ENCODE measurements at regions of chr3 and their contacts with region 1.

Region 1: GRCh38 chr3:194472290-194472920 is 14.4 kb downstream of the ATP13A3 start:
- H3K4me3 Mint-ChIP-seq: no peak overlapping the region
- H3K27ac Mint-ChIP-seq: no peak overlapping the region
- H3K4me1 Mint-ChIP-seq: peaks cover 22% of the 10 kb centered on the region
- H3K27me3 Mint-ChIP-seq: no peaks in the 10 kb centered on the region

Region 2: GRCh38 chr3:194231929-194232842 is 240.2 kb before region 1 on chr3:
- intact Hi-C with region 1: no loop called
- H3K4me3 Mint-ChIP-seq: no peak overlapping the region
- H3K27ac Mint-ChIP-seq: no peak overlapping the region
- H3K4me1 Mint-ChIP-seq: no peaks in the 10 kb centered on the region
- H3K27me3 Mint-ChIP-seq: peaks cover 16% of the 10 kb centered on the region

Region 3: DNA sequence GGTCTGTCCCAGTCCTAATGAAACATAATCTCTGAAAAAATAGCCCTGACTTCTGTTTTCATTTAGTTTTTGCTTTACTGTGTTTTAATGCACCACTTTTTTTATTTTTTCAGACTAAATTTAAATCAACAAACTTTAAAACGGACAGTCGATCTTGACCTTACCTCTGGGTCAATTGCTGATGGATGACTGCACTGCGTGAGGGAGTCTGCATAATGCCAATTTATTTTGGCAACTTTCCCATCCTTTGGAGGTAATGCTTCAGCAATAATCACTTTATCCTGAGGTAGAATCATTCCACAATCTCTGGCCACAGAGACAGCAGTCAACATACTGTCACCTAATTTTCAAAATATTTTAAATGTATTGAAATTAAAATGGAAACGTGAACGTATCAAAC is 40.9 kb before region 1 on chr3:
- intact Hi-C with region 1: no loop called
- H3K4me3 Mint-ChIP-seq: no peak overlapping the region
- H3K27ac Mint-ChIP-seq: no peak overlapping the region
- H3K4me1 Mint-ChIP-seq: no peaks in the 10 kb centered on the region
- H3K27me3 Mint-ChIP-seq: no peaks in the 10 kb centered on the region

Region 4: DNA sequence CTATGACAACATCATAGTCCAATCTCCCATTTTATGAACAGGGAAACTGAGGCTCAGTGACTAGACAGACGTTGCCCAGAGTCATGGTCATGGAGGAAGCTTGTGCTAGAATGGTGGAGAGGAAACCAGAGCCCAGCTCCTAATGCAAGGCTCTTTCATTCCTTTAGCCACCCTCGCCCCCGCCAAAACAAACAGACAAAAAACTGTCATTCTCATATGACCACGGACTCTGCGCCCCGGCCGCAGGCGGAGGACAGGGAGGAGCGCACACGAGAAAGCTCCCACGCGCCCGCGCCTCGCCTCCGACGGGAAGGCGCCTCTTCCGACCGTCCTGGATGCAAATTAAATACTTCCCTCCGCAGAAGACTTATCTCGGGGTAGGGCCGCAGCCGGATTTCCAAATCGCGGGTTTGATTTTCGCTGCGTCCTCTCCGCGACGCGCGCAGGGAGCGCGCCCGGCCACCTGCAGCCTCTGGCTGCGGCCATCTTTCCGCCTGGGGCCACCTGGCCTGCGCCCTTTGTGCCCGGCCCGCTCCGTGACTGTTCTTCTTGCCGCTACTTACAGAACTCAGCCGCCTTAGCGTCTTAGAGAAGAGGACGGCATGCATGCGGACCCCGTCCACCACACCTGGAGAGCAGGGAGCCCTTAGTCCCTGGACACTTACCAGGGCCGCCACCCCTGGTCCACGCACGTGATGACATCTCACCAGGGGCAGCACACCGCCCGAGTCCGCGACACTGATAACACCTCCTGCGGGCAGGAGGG is 15.1 kb after region 1 on chr3:
- intact Hi-C with region 1: no loop called
- H3K4me3 Mint-ChIP-seq: peak overlapping the region; percentile 85
- H3K27ac Mint-ChIP-seq: peak overlapping the region; percentile 92
- H3K4me1 Mint-ChIP-seq: peaks cover 67% of the 10 kb centered on the region
- H3K27me3 Mint-ChIP-seq: no peaks in the 10 kb centered on the region

Region 5: GRCh38 chr3:194508491-194509453 is 36.4 kb after region 1 on chr3:
- intact Hi-C with region 1: loop called (anchors 5 kb)
- H3K4me3 Mint-ChIP-seq: no peak overlapping the region
- H3K27ac Mint-ChIP-seq: peak overlapping the region; percentile 56
- H3K4me1 Mint-ChIP-seq: peaks cover 27% of the 10 kb centered on the region
- H3K27me3 Mint-ChIP-seq: no peaks in the 10 kb centered on the region

Region 6: GRCh38 chr3:194573691-194574437 is 101.5 kb after region 1 on chr3:
- intact Hi-C with region 1: loop called (anchors 1 kb)
- H3K4me3 Mint-ChIP-seq: no peak overlapping the region
- H3K27ac Mint-ChIP-seq: peak overlapping the region; percentile 76
- H3K4me1 Mint-ChIP-seq: peaks cover 72% of the 10 kb centered on the region
- H3K27me3 Mint-ChIP-seq: peaks cover 8% of the 10 kb centered on the region

Region 7: DNA sequence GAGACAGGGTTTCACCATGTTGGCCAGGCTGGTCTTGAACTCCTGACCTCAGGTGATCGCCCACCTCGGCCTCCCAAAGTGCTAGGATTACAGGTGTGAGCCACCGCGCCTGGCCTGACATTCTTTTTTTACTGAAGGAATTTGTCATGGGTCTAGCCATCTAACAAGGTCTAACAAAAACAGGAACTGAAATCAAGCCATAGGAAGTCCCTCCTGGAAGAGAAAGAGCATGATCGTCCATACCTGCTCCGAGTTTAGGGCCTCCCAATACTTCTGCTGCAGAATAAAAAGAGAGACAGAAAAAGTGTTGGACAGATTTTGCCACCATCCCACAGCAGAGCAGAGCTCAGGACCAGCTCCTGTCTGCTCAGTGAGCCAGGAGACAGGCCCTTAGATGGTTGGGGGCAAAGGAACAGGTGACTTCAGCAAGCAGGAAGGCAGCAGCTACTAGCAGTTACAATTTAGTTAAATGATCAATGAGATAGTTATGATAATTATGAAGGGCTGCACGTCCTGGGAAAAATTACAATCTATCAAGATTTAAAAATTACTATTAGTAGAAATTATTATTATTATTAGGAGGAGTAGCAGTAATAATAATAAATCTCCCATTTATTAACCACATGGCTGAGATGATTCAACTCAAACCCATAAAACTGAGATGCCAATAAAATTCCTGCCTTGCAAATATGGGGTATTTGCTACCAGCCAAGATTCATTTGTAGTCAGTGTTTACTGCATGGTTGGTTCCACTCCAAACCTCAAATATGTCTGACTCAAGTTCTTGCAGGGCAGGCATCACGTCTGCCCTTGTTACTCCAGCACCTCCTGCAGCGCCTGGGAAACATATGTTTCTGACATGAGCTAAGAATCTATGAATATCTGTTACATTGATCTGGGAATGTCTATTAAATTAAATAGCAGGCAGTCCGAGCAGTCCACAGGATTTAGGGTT is 120.7 kb after region 1 on chr3:
- intact Hi-C with region 1: loop called (anchors 1 kb)
- H3K4me3 Mint-ChIP-seq: no peak overlapping the region
- H3K27ac Mint-ChIP-seq: no peak overlapping the region
- H3K4me1 Mint-ChIP-seq: peaks cover 9% of the 10 kb centered on the region
- H3K27me3 Mint-ChIP-seq: no peaks in the 10 kb centered on the region

Region 8: GRCh38 chr3:194607592-194608389 is 135.4 kb after region 1 on chr3:
- intact Hi-C with region 1: no loop called
- H3K4me3 Mint-ChIP-seq: no peak overlapping the region
- H3K27ac Mint-ChIP-seq: no peak overlapping the region
- H3K4me1 Mint-ChIP-seq: peaks cover 20% of the 10 kb centered on the region
- H3K27me3 Mint-ChIP-seq: no peaks in the 10 kb centered on the region

Measured in dendritic cell treated with granulocyte-macrophage colony-stimulating factor and Interleukin-4, amounts not matched to agents 40 ng/mL and 50 ng/mL, for 4 days (primary cell).